K562 (cell line): ENCODE measurements at regions of chr1 and their contacts with region 1.

Region 1: DNA sequence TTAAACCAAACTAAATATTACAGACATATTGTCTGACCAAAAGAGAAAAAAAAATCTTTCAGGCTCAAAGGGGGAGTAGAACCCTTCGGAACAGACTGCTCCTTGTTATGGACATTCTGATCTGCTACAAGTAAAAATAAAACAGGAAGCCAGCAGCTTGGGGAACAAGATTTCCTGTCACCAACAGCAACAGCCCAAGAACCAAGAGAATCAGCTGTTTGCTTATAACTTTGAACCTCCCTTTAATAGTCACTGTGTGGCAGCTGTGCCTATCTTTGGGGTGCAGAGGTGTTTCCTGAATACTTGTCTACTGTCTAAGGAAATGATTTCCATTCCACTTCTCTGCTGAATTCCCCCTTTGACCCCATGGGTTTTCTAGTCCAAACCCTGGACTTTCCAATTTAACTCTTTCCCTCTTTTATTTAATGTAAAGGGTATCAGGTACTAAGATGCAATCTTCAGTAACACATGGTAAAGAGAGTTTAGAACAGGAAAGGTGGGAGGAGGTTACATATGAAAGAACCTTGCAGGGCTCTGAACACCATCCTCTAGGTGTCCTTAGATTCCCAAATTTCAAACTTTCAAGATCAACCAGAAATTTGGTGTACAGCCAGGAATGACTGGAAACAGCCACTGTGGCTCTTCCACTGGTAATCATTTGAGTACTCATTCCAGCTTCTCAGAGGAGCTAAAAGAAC is 38.6 kb downstream of the GPR3 start:
- DNase-seq: peak in 3 of 4 experiments; percentile 24 to 51 (median 36)
- ATAC-seq: peak; percentile 3; the same call in 1 of the 3 replicates
- H3K4me3 ChIP-seq: no peak overlapping the region
- H3K27ac ChIP-seq: peak overlapping the region; percentile 52; the same call in 1 of the 3 replicates
- H3K4me1 ChIP-seq: peaks cover 21 to 71% of the 10 kb centered on the region in 2 experiments
- H3K27me3 ChIP-seq: no peaks in the 10 kb centered on the region
- CTCF ChIP-seq: peak in 1 of 3 experiments; percentile 26; a peak in 2 of 6 replicates
- EP300 ChIP-seq: no peak
- POLR2A ChIP-seq: no peak
- RAD21 ChIP-seq: peak in 1 of 2 experiments; percentile 35; a peak in 2 of 4 replicates

Region 2: GRCh38 chr1:26959722-26960615 is 471.1 kb before region 1 on chr1 and contains the start of gene KDF1:
- CTCF ChIA-PET with region 1: no interaction called
- POLR2A ChIA-PET with region 1: no interaction called
- in situ Hi-C with region 1: no loop called
- intact Hi-C with region 1: no loop called
- DNase-seq: peak; percentile 67 to 87 (median 78)
- ATAC-seq: peak; percentile 93
- H3K4me3 ChIP-seq: peak within 1 kb of the TSS; percentile 63
- H3K27ac ChIP-seq: no peak within 1 kb of the TSS
- H3K4me1 ChIP-seq: peaks cover 5 to 18% of the 10 kb centered on the region in 2 experiments; a peak in 4 of 5 replicates
- H3K27me3 ChIP-seq: peaks cover 5 to 16% of the 10 kb centered on the region in 2 experiments; a peak in 4 of 5 replicates
- CTCF ChIP-seq: peak in 2 of 3 experiments; percentile 26 to 41; a peak in 2 of 6 replicates
- EP300 ChIP-seq: no peak
- POLR2A ChIP-seq: no peak
- RAD21 ChIP-seq: no peak
- polyA plus RNA-seq, gene KDF1: 0.38 to 0.48 TPM

Region 3: DNA sequence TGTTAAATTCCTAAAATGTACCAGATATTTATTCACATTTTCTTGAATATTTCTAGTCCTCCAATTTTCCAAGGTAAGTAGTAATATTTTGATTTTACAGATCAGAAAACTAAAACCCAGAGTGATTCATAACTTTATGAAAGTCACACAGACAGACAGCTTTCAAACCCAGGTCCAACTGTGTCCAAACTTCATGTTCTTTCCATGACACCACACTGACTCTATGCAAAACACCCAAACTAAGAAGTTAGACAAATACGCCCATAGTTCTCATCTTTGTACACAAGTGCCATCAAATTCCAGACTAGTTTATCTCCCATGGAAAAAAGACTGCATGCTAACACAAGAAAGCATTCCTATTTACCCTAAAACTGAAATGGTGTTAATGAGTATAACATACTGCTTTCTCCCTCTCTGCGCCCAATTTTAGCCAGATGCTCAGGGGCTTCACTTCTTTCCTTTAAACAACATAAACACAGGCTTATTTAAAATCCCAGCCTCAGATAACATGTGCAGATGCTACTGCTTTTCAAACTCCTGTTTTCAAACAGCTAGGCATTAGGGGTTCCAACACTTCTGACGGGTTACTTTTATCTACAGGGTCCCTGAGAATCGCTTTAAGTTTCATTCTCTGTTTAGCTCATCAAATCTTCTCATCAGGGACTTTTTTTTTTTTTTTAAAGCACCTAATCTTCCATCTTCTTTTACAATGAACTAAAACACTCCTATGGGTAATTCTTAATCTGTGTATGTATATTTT is 14.3 kb after region 1 on chr1:
- CTCF ChIA-PET with region 1: no interaction called
- POLR2A ChIA-PET with region 1: interaction called, 12 read pairs
- in situ Hi-C with region 1: no loop called
- intact Hi-C with region 1: no loop called
- DNase-seq: no peak
- ATAC-seq: no peak
- H3K4me3 ChIP-seq: no peak overlapping the region
- H3K27ac ChIP-seq: no peak overlapping the region
- H3K4me1 ChIP-seq: no peaks in the 10 kb centered on the region; a peak in 2 of 5 replicates
- H3K27me3 ChIP-seq: no peaks in the 10 kb centered on the region
- CTCF ChIP-seq: no peak
- EP300 ChIP-seq: no peak
- POLR2A ChIP-seq: no peak
- RAD21 ChIP-seq: no peak

Region 4: GRCh38 chr1:27489910-27490741 is 59.1 kb after region 1 on chr1 and contains the start of gene WASF2:
- CTCF ChIA-PET with region 1: no interaction called
- POLR2A ChIA-PET with region 1: interaction called, 3 read pairs
- in situ Hi-C with region 1: no loop called
- intact Hi-C with region 1: loop called (anchors 5 kb)
- DNase-seq: peak; percentile 93 to 99 (median 98)
- ATAC-seq: peak; percentile 96
- H3K4me3 ChIP-seq: peak within 1 kb of the TSS; percentile 79
- H3K27ac ChIP-seq: peak within 1 kb of the TSS; percentile 99
- H3K4me1 ChIP-seq: peaks cover 8 to 25% of the 10 kb centered on the region in 2 experiments; a peak in 4 of 5 replicates
- H3K27me3 ChIP-seq: no peaks in the 10 kb centered on the region
- CTCF ChIP-seq: no peak; a peak in 1 of 6 replicates
- EP300 ChIP-seq: peak; percentile 5
- POLR2A ChIP-seq: peak; percentile 92
- RAD21 ChIP-seq: 0 out of 4 replicates have a peak, but pooled peaks of 1 of the 2 experiments have one; percentile 13
- polyA plus RNA-seq, gene WASF2: 8.2 to 9.7 TPM